PC-9 (cell line): ENCODE measurements at regions of chr1 and their contacts with region 1.

Region 1: DNA sequence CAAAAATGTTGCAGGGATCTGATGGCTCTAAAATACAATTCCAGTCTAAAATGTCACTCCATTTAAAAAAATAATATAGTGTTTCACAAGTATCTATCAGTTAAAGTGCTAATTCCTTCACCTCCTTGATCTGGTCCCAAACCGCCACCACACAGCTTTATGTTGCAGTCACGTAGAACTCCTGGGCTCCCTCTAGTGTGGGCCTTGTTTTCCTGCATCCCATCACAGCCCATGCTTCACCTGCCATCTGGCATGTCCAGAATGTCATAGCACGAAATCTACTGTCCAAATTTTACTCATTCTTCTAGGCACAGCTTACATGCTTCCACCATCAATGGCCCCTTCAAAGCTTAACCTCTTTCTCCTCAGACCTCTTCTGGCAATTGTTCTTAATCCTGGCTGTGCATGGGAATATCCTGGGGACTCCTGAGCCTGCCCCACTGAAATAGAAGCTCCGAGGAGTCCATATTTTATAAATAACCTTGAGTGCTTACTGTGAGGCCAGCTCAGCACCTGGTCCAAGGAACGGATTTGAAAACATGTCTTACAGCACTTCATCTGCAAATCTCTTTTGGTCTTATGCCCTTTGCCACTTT is 15.5 kb downstream of the FYB2 start:
- DNase-seq: peak; percentile 40 to 51
- H3K4me3 ChIP-seq: no peak overlapping the region
- H3K27ac ChIP-seq: no peak overlapping the region
- H3K4me1 ChIP-seq: no peaks in the 10 kb centered on the region
- H3K27me3 ChIP-seq: no peaks in the 10 kb centered on the region
- CTCF ChIP-seq: peak; percentile 72

Region 2: DNA sequence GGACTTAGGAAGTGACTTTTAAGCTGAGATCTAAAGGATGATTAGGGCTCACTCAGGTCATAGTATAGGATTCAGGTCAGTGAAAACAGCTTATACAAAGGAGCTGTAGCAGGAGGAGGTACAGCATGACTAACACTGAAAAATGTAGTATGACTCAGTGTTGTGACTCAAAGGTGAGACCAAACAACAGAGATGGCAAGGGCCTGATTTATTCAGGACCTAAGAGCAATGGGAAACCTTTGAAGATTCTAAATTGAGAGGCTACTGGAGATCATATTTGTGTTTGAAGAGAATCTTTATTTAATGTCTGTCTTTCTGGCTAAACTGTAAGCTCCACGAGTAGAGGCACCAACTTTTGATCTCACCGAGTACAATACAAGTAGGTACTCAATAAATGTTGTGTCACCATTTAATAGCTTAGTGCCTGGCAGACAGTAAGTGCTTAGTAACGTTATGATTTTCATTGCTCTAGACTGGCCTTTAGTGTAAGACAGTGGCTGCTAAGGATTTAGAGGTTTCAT is 115.1 kb before region 1 on chr1:
- CTCF ChIA-PET with region 1: no interaction called
- POLR2A ChIA-PET with region 1: no interaction called
- intact Hi-C with region 1: no loop called
- DNase-seq: peak; percentile 36 to 96
- H3K4me3 ChIP-seq: no peak overlapping the region
- H3K27ac ChIP-seq: peak overlapping the region; percentile 77
- H3K4me1 ChIP-seq: peaks cover 41% of the 10 kb centered on the region
- H3K27me3 ChIP-seq: no peaks in the 10 kb centered on the region
- CTCF ChIP-seq: no peak

Region 3: DNA sequence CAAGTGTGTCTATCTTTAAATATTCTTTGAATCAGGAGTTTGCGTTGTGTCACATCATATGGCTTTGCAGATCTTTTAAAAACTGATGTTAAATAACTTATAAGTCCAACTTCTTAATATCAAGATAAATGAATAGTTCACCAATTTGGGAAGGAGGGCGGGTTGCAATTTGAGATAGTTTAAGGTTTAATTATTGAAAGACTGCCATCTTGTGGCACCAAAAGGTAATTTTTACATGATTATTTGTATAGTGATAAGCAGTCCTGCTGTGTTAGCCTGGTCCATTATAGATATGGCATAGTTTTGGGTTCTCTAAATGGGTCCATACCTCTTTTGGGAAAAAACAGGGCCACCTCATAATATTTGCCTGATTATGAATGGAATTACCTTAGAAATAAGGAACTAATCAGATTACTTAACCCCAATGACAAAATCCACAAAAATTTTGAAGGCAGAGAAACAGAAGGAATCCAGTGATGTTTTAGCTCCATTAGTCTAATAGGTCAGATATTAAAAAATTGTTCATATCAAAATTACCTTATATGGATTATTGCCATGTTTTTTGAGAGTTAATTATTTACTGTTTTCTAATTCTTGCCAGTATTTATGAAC is 94.3 kb before region 1 on chr1:
- CTCF ChIA-PET with region 1: no interaction called
- POLR2A ChIA-PET with region 1: no interaction called
- intact Hi-C with region 1: loop called (anchors 5 kb)
- DNase-seq: peak in 1 of 2 experiments; percentile 49
- H3K4me3 ChIP-seq: no peak overlapping the region
- H3K27ac ChIP-seq: no peak overlapping the region
- H3K4me1 ChIP-seq: peaks cover 17% of the 10 kb centered on the region
- H3K27me3 ChIP-seq: no peaks in the 10 kb centered on the region
- CTCF ChIP-seq: peak; percentile 80